ENCODE measurements at regions of chr4 and their contacts with region 1.

Region 1: DNA sequence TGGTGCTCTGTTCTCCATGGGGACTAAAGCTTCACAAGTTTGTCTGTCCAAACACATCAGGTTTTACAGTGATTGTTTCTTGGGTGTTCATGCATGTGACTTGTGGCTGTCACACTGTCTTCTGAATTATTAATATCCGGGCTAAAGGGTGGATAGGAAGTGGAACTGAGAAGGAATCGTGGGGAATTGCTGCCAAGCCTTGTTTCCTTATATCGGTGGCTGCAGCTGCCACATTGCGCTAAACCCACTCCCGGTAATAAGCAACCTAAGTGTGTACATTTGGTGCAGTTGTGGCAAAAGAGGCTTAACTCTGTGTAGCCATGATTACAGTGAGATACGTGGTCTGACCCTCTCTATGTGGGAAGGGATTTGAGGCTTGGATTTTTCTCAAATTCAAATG is 30.7 kb downstream of the SEPTIN11 start:
- DNase-seq: no peak
- H3K4me3 Mint-ChIP-seq: no peak overlapping the region
- H3K27ac Mint-ChIP-seq: no peak overlapping the region
- H3K4me1 Mint-ChIP-seq: peaks cover 46% of the 10 kb centered on the region
- H3K27me3 Mint-ChIP-seq: no peaks in the 10 kb centered on the region

Region 2: DNA sequence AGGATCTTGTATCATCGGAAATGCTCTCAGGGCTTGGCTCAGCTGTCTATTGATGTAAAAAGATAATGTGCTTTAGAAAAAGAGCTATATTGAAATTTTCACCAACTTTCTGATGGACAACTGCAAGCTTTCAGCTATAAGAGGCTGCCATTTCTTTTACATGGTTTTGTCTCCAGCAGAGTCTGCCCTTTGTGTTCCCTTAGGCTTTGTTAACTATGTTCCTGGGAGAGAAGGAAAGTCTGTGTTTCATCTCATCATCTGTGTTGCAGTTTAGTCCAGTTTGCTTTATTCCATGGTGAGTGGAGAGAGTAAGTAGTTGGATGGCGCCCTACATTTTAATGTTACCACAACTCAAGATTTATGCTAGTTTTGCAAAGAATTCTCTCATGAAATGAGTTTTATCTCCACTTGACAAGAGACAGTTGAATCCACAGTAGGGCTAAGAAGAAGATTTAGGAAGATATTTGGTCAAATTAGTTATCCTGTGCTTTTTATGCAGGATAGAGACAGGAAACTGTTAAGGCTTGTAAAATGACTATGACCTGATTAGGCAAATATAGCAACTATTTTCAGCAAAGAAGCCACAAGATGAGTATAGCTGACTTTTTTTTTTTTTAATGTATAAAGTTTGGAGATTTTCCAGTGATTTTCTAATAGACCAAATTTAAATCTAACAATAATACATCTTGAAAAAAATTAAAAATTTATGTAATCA is 14.2 kb before region 1 on chr4:
- CTCF ChIA-PET with region 1: interaction called, 3 read pairs
- intact Hi-C with region 1: loop called (anchors 2 kb)
- DNase-seq: no peak
- H3K4me3 Mint-ChIP-seq: no peak overlapping the region
- H3K27ac Mint-ChIP-seq: no peak overlapping the region
- H3K4me1 Mint-ChIP-seq: peaks cover 7% of the 10 kb centered on the region
- H3K27me3 Mint-ChIP-seq: no peaks in the 10 kb centered on the region

Region 3: DNA sequence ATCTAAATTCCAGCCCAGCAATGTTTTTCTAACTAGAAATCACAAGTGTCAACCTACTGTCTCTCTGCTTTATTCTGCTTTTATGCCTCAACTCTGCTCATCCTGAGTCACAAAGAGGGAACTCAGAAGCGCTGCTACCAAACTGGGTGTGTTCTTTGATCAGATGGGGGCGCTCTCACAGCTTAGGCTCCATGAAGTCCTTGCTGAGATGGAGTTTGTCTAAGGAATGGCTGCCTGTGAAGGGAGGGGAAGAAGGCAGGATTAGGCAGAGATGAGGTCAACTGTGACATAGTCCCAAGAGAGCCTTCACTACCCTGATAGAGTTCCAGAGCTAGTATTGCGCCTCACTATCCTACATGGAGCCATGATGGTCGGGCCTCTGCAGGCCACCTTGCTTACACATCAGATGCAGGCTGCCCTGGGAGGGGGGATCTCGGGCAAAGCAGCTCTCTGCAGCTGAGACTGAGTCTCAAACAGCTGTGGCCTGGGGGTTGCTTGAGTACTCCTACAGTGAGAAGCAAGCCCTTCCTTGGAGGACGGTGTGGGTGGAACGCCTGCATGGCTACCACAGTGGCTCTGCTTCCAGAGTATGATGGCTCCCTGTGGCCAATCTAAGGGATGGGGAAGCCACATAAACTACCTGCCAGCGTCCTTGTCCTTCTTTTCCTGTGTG is 396.7 kb after region 1 on chr4:
- CTCF ChIA-PET with region 1: no interaction called
- intact Hi-C with region 1: no loop called
- DNase-seq: no peak
- H3K4me3 Mint-ChIP-seq: no peak overlapping the region
- H3K27ac Mint-ChIP-seq: no peak overlapping the region
- H3K4me1 Mint-ChIP-seq: no peaks in the 10 kb centered on the region
- H3K27me3 Mint-ChIP-seq: no peaks in the 10 kb centered on the region

Measured in activated naive CD4-positive, alpha-beta T cell treated with anti-CD3 and anti-CD28 coated beads for 36 hours (primary cell).